Panc1 (cell line): ENCODE measurements at regions of chr4 and their contacts with region 1.

Region 1: DNA sequence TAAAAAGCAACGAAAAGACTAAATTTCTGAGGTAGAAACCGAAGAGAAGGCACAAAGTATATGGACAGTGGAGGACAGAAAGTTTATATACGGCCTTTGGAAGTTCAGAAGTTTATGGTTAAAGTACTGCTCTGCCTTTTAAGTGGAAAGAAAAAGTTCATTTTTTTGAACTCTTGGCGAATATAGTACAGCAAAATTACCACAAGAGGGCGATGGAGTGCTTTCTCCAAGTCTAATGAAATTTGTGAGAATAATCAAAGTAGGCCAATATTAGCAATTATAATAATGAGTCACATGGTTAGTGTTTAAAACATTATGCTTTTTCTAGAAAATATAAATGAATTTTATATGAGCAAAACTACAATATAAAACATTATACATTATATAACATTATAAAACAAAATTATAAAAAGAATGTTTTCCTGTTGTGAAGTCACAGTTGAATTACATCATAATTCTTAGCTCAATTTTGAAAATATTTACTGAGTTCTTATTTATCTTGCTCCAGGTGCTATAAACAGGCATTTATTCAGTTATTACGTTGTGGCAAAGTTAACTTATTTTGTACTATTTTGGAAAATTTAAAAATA is 136.2 kb upstream of the BMPR1B start:
- DNase-seq: no peak
- ATAC-seq: no peak
- H3K4me3 ChIP-seq: no peak overlapping the region
- H3K27ac ChIP-seq: no peak overlapping the region
- H3K4me1 ChIP-seq: no peaks in the 10 kb centered on the region
- H3K27me3 ChIP-seq: no peaks in the 10 kb centered on the region
- CTCF ChIP-seq: peak; percentile 68; the same call in 1 of the 2 replicates

Region 2: DNA sequence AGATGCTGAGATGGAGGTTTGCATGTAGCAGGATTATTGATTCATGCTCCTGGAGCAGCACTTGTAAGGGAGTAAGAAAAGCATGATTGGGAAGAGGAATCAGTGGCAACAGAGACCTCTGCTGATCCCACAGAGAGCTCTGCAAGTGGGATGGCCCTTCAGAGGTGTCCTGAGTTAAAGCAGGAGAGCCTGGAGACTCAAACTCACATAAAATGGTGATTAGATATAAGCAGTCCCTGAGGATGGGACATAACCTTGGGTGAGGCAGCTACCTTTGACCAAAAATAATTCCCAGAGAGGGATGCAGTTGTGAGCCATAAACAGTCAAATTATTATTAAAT is 110.7 kb after region 1 on chr4:
- CTCF ChIA-PET with region 1: no interaction called
- POLR2A ChIA-PET with region 1: no interaction called
- in situ Hi-C with region 1: no loop called
- intact Hi-C with region 1: loop called (anchors 5 kb)
- DNase-seq: no peak
- ATAC-seq: no peak
- H3K4me3 ChIP-seq: no peak overlapping the region
- H3K27ac ChIP-seq: no peak overlapping the region
- H3K4me1 ChIP-seq: no peaks in the 10 kb centered on the region
- H3K27me3 ChIP-seq: no peaks in the 10 kb centered on the region
- CTCF ChIP-seq: no peak

Region 3: DNA sequence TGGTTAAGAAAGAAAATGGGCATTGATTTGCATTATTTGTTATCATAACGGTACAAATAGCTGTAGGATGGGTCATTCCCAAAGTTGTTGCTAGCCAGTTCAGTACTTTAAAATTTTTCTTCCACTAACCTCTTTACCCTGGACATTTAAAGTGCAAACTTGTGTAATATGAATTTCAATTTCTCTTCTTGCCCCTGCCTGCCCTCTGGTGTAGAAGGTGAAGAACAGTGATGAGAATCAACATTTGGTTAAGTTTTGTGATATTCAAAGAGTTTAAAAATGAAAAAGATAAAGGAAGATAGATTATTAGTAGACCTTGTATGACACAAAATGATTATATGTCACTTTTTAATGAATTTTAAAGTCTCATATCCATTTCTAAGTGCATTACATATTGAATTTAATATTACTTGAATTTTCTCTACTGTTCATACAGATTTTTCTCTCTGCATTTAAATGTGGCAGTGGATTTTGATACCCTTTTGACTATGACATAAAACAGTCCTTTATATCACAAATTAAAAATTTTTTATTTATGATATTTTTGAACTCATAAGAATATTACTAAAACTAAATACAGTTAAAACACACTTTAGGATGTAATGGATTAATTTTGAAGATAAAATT is 473.9 kb after region 1 on chr4:
- CTCF ChIA-PET with region 1: no interaction called
- POLR2A ChIA-PET with region 1: no interaction called
- in situ Hi-C with region 1: no loop called
- intact Hi-C with region 1: loop called (anchors 5 kb)
- DNase-seq: no peak
- ATAC-seq: no peak
- H3K4me3 ChIP-seq: no peak overlapping the region
- H3K27ac ChIP-seq: no peak overlapping the region
- H3K4me1 ChIP-seq: no peaks in the 10 kb centered on the region
- H3K27me3 ChIP-seq: no peaks in the 10 kb centered on the region
- CTCF ChIP-seq: peak; percentile 48; the same call in 1 of the 2 replicates

Region 4: DNA sequence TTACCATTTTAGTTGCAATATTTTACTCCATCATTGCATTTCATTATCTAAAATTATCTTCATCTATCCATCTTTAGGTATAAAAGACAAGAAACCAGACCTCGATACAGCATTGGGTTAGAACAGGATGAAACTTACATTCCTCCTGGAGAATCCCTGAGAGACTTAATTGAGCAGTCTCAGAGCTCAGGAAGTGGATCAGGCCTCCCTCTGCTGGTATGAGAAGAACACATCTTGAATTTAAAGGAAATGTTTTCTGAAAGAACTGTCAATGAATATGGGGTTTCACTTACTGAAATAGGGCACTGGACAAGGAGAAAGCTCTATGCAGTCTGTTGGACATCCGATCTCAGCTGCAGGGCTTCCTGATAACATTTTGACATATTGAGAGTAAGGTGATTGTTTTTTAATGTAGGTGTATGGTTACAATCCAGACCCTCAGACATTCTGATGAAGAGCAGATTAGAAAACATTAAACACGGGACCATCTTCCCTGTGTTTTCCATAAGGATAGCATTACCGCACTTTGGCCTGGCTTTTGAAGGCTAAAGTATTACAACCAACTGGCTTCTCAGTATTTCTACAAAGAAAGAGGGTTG is 503.4 kb after region 1 on chr4:
- CTCF ChIA-PET with region 1: no interaction called
- POLR2A ChIA-PET with region 1: no interaction called
- in situ Hi-C with region 1: no loop called
- intact Hi-C with region 1: loop called (anchors 10 kb)
- DNase-seq: peak; percentile 7
- ATAC-seq: peak; percentile 78
- H3K4me3 ChIP-seq: no peak overlapping the region
- H3K27ac ChIP-seq: no peak overlapping the region
- H3K4me1 ChIP-seq: no peaks in the 10 kb centered on the region
- H3K27me3 ChIP-seq: no peaks in the 10 kb centered on the region
- CTCF ChIP-seq: peak; percentile 63